ENCODE measurements at regions of chr12 and their contacts with region 1.

Region 1: DNA sequence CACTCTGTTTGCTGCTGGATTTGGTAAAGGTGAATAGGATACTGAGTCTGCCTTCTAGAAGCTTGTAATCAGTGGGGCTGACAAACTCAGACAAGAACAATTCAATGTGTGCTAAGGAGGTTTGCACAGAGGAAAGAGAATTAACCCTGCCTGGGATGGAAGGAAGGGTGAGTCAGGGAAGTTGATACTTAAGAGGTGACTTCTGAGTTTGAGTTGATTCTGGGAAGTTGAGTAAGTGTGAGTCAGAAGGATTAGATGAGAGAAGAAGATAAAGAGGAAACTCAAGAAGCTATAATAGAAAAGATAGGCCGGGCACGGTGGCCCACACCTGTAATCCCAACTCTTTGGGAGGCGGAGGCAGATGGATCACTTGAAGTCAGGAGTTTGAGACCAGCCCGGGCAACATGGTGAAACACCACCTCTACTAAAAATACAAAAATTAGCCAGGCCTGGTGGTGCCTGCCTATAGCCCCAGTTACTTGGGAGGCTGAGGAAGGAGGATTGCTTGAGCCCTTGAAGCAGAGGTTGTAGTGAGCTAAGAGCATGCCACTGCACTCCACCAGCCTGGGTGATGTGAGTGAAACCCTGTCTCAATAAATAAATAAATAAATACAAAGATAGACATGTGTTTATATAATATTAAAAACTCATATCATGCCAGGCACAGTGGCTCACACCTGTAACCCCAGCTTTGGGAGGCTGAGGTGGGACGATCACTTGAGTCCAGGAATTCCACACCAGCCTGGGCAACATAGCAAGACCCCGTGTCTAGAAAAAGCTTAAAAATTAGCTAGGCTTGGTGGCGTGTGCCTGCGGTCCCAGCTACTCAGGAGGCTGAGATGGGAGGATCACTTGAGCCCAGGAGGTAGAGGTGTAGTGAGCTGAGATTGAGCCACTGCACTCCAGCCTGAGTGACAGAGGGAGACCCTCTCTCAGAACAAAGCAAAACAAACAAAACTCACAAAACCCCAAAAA is 126.8 kb upstream of the CPM start:
- DNase-seq: peak; percentile 37
- H3K4me3 Mint-ChIP-seq: no peak overlapping the region
- H3K27ac Mint-ChIP-seq: peak overlapping the region; percentile 81
- H3K4me1 Mint-ChIP-seq: peaks cover 49% of the 10 kb centered on the region
- H3K27me3 Mint-ChIP-seq: no peaks in the 10 kb centered on the region

Region 2: GRCh38 chr12:68792952-68793835 is 266.6 kb before region 1 on chr12:
- CTCF ChIA-PET with region 1: no interaction called
- intact Hi-C with region 1: no loop called
- DNase-seq: peak; percentile 37
- H3K4me3 Mint-ChIP-seq: no peak overlapping the region
- H3K27ac Mint-ChIP-seq: no peak overlapping the region
- H3K4me1 Mint-ChIP-seq: no peaks in the 10 kb centered on the region
- H3K27me3 Mint-ChIP-seq: no peaks in the 10 kb centered on the region

Region 3: GRCh38 chr12:68863109-68863770 is 196.5 kb before region 1 on chr12:
- CTCF ChIA-PET with region 1: no interaction called
- intact Hi-C with region 1: no loop called
- DNase-seq: no peak
- H3K4me3 Mint-ChIP-seq: no peak overlapping the region
- H3K27ac Mint-ChIP-seq: no peak overlapping the region
- H3K4me1 Mint-ChIP-seq: peaks cover 6% of the 10 kb centered on the region
- H3K27me3 Mint-ChIP-seq: no peaks in the 10 kb centered on the region

Region 4: GRCh38 chr12:68932961-68933893 is 126.5 kb before region 1 on chr12 and contains the start of gene CPM:
- CTCF ChIA-PET with region 1: no interaction called
- intact Hi-C with region 1: loop called (anchors 2 kb)
- DNase-seq: peak; percentile 76
- H3K4me3 Mint-ChIP-seq: peak within 1 kb of the TSS; percentile 82
- H3K27ac Mint-ChIP-seq: peak within 1 kb of the TSS; percentile 58
- H3K4me1 Mint-ChIP-seq: peaks cover 21% of the 10 kb centered on the region
- H3K27me3 Mint-ChIP-seq: peaks cover 22% of the 10 kb centered on the region
- total RNA-seq, gene CPM: 50.5 to 55.1 TPM